ENCODE measurements at regions of chr11 and their contacts with region 1.

Region 1: DNA sequence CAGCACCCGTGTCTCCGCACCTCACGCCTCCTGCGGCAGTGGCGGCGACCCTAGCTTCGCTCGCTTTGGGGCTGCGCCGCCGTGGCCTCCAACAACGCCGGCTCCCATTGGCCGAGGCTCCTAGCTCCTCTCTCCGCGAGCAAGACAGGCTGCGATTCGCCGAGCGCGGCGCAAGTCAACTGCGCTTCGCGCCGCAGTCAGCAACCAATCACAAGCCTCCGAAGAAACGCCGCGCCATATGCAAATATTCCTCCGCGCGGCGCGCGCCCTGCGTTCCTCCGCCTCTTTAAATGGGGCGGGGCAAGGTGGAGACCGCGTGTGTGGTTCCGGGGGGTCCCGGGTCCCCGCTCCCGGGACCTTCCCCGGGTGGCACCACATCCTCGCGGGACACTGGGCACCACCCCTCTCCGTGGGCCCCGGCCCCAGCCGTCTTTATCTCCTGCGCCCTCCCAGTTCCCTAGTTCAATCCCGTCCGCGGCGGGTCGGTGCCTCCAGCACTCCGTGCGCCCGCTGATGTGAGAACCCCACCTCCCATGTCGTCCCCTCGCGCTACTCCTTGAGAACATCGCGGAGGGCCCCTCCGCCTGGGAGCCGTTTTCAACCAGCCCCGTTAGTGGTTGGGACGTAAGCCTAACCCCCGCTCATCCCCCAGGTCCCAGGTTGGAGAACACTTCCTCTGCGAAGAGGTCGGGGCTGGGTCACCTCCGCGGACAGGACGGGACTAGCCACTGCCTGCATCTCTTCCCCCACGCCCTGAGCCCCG is at the start of gene NAP1L4:
- DNase-seq: peak; percentile 91 to 99 (median 96)
- ATAC-seq: peak; percentile 83
- H3K4me3 ChIP-seq: peak within 1 kb of the TSS; percentile 95
- H3K4me3 Mint-ChIP-seq: peak within 1 kb of the TSS; percentile 99
- H3K27ac ChIP-seq: peak within 1 kb of the TSS; percentile 73 to 78
- H3K27ac Mint-ChIP-seq: peak within 1 kb of the TSS; percentile 89
- H3K4me1 ChIP-seq: peaks cover 17% of the 10 kb centered on the region
- H3K4me1 Mint-ChIP-seq: peaks cover 35% of the 10 kb centered on the region
- H3K27me3 ChIP-seq: no peaks in the 10 kb centered on the region
- H3K27me3 Mint-ChIP-seq: no peaks in the 10 kb centered on the region
- CTCF ChIP-seq: no peak
- total RNA-seq, gene NAP1L4: 262 to 285 TPM

Region 2: GRCh38 chr11:2885676-2886081 is 106.7 kb before region 1 on chr11 and contains the start of gene CDKN1C:
- CTCF ChIA-PET with region 1: no interaction called
- POLR2A ChIA-PET with region 1: no interaction called
- intact Hi-C with region 1: loop called in 1 of 2 experiments (anchors 5 kb)
- DNase-seq: peak; percentile 68 to 95 (median 82)
- ATAC-seq: peak; percentile 87
- H3K4me3 ChIP-seq: peak within 1 kb of the TSS; percentile 84
- H3K4me3 Mint-ChIP-seq: peak within 1 kb of the TSS; percentile 96
- H3K27ac ChIP-seq: no peak within 1 kb of the TSS
- H3K27ac Mint-ChIP-seq: peak within 1 kb of the TSS; percentile 77
- H3K4me1 ChIP-seq: peaks cover 41% of the 10 kb centered on the region
- H3K4me1 Mint-ChIP-seq: peaks cover 19% of the 10 kb centered on the region
- H3K27me3 ChIP-seq: peaks cover 0 to 4% of the 10 kb centered on the region in 2 experiments
- H3K27me3 Mint-ChIP-seq: no peaks in the 10 kb centered on the region
- CTCF ChIP-seq: no peak
- total RNA-seq, gene CDKN1C: 1.9 to 2.5 TPM

Region 3: DNA sequence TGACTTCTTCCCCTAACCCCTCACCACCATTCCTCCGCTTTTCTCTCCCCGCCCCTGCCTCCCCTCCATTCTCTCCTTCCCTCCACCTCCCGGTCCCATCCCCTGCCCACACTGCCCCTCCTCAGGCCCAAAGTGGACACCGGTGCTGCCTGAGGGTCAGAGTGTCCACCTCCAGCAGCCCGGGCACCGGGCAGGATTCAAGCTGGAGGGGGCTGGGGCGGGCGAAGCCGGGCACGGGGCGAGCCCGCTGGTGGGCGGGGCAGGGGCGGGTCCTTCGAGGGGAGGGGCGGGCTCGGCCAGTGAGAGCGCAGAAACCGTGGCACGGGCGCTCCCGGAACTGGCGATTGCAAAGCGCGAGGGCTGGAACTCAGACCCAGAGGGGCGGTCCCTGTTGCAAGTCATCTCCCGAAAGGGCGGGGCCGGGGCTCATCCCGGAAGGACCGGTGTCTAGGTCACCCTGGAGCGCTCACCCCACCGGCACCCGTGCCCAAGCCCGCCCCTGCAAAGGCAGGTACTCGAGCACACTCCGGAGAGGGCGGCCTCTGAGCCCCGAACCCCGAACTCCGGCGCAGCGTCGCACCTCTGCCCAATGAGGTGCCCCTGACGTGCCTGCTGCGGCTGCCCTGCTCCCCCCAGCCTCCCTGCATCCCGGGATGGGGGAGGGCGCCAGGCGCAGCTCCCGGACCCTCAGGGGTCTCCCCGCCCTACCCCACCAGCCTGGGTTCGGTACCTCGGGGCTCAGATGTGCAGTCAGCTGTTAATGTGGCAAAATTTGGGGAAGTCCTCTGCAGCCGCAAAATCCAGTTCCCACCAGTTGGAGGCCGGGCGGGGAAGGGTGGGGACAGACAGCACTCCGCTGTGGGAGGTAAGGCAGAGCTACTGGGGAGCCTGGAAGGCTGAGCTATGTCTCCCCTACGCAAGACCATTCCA is 90.3 kb before region 1 on chr11:
- CTCF ChIA-PET with region 1: no interaction called
- POLR2A ChIA-PET with region 1: interaction called, 4 read pairs
- intact Hi-C with region 1: loop called in 1 of 2 experiments (anchors 5 kb)
- DNase-seq: peak; percentile 71 to 96 (median 87)
- ATAC-seq: peak; percentile 83
- H3K4me3 ChIP-seq: peak overlapping the region; percentile 69
- H3K4me3 Mint-ChIP-seq: peak overlapping the region; percentile 86
- H3K27ac ChIP-seq: peak overlapping the region; percentile 18 to 50
- H3K27ac Mint-ChIP-seq: peak overlapping the region; percentile 44
- H3K4me1 ChIP-seq: peaks cover 54% of the 10 kb centered on the region
- H3K4me1 Mint-ChIP-seq: peaks cover 49% of the 10 kb centered on the region
- H3K27me3 ChIP-seq: no peaks in the 10 kb centered on the region
- H3K27me3 Mint-ChIP-seq: no peaks in the 10 kb centered on the region
- CTCF ChIP-seq: no peak

Region 4: GRCh38 chr11:2975594-2975993 is 16.8 kb before region 1 on chr11:
- CTCF ChIA-PET with region 1: interaction called, 17 read pairs
- POLR2A ChIA-PET with region 1: interaction called, 14 read pairs
- intact Hi-C with region 1: loop called in 1 of 2 experiments (anchors 1 kb)
- DNase-seq: peak; percentile 25 to 78 (median 48)
- ATAC-seq: peak; percentile 97
- H3K4me3 ChIP-seq: no peak overlapping the region
- H3K4me3 Mint-ChIP-seq: no peak overlapping the region
- H3K27ac ChIP-seq: no peak overlapping the region
- H3K27ac Mint-ChIP-seq: no peak overlapping the region
- H3K4me1 ChIP-seq: peaks cover 13% of the 10 kb centered on the region
- H3K4me1 Mint-ChIP-seq: peaks cover 38% of the 10 kb centered on the region
- H3K27me3 ChIP-seq: no peaks in the 10 kb centered on the region
- H3K27me3 Mint-ChIP-seq: no peaks in the 10 kb centered on the region
- CTCF ChIP-seq: peak; percentile 56

Region 5: GRCh38 chr11:3021125-3021524 is 28.7 kb after region 1 on chr11:
- CTCF ChIA-PET with region 1: interaction called, 11 read pairs
- POLR2A ChIA-PET with region 1: interaction called, 206 read pairs
- intact Hi-C with region 1: no loop called
- DNase-seq: peak in 12 of 14 experiments; percentile 28 to 74 (median 38)
- ATAC-seq: peak; percentile 60
- H3K4me3 ChIP-seq: no peak overlapping the region
- H3K4me3 Mint-ChIP-seq: no peak overlapping the region
- H3K27ac ChIP-seq: no peak overlapping the region
- H3K27ac Mint-ChIP-seq: no peak overlapping the region
- H3K4me1 ChIP-seq: peaks cover 54% of the 10 kb centered on the region
- H3K4me1 Mint-ChIP-seq: peaks cover 35% of the 10 kb centered on the region
- H3K27me3 ChIP-seq: no peaks in the 10 kb centered on the region
- H3K27me3 Mint-ChIP-seq: no peaks in the 10 kb centered on the region
- CTCF ChIP-seq: peak; percentile 42

Region 6: DNA sequence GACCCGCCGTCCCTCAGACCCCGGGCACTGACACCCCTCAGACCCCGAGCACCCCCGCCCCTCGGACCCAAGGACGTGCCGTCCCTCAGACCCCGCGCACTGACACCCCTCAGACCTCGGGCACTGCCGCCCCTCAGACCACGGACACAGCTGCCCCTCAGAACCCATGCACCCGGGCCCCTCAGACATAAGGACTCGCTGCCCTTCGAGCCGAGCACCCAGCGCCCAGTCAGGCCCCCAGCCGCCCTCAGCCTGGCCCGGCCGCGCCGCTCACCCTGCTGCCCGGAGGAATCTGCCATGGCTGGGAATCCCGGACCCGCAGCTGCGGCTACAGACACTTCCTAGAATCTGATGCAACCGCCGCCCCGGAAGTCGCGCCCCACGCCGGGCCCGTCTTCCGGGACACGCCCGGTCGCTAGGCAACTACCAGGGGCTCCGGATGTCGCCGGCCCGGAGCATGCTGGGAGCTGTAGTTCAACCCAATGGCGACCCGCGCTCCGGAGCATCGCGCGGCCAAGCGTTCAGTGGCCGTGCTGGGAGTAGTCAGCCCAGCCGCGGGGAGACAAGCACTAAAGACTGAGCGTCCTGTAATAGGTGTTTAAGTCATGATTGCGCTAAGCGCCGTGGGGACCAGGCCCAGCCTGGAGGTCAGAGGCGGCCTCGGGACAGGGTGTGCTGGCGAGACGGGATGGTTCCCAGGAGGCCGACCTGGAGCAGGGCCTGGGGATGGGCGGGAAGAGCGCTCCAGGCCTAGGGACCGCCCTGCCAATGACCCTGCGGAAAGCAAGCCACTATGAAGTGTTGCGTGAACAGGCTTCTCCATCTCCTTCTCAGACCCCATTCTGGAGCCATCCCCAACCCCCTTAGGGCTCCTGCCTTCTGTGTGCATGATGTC is 64.9 kb after region 1 on chr11 and contains the start of gene CARS1:
- CTCF ChIA-PET with region 1: interaction called, 3 read pairs
- POLR2A ChIA-PET with region 1: interaction called, 9 read pairs
- intact Hi-C with region 1: loop called (anchors 2 to 5 kb)
- DNase-seq: peak; percentile 82 to 97 (median 91)
- ATAC-seq: peak; percentile 99
- H3K4me3 ChIP-seq: peak within 1 kb of the TSS; percentile 83
- H3K4me3 Mint-ChIP-seq: peak within 1 kb of the TSS; percentile 91
- H3K27ac ChIP-seq: peak within 1 kb of the TSS; percentile 63 to 73
- H3K27ac Mint-ChIP-seq: peak within 1 kb of the TSS; percentile 75
- H3K4me1 ChIP-seq: peaks cover 48% of the 10 kb centered on the region
- H3K4me1 Mint-ChIP-seq: peaks cover 37% of the 10 kb centered on the region
- H3K27me3 ChIP-seq: no peaks in the 10 kb centered on the region
- H3K27me3 Mint-ChIP-seq: no peaks in the 10 kb centered on the region
- CTCF ChIP-seq: no peak
- total RNA-seq, gene CARS1: 24.1 to 25.2 TPM

Region 7: GRCh38 chr11:3164979-3165814 is 172.8 kb after region 1 on chr11 and contains the start of gene OSBPL5:
- CTCF ChIA-PET with region 1: no interaction called
- POLR2A ChIA-PET with region 1: no interaction called
- intact Hi-C with region 1: no loop called
- DNase-seq: peak in 12 of 14 experiments; percentile 14 to 67 (median 46)
- ATAC-seq: peak; percentile 67
- H3K4me3 ChIP-seq: peak within 1 kb of the TSS; percentile 58
- H3K4me3 Mint-ChIP-seq: peak within 1 kb of the TSS; percentile 91
- H3K27ac ChIP-seq: no peak within 1 kb of the TSS
- H3K27ac Mint-ChIP-seq: peak within 1 kb of the TSS; percentile 25
- H3K4me1 ChIP-seq: peaks cover 38% of the 10 kb centered on the region
- H3K4me1 Mint-ChIP-seq: peaks cover 49% of the 10 kb centered on the region
- H3K27me3 ChIP-seq: peaks cover 14 to 23% of the 10 kb centered on the region in 2 experiments
- H3K27me3 Mint-ChIP-seq: peaks cover 24% of the 10 kb centered on the region
- CTCF ChIP-seq: no peak
- total RNA-seq, gene OSBPL5: 6.7 to 9.1 TPM

Measured in CD4-positive, alpha-beta T cell (primary cell).